ENCODE measurements at regions of chr17 and their contacts with region 1.

Region 1: GRCh38 chr17:39710002-39710964 is 10.4 kb downstream of the ERBB2 start:
- DNase-seq: no peak
- ATAC-seq: no peak
- H3K4me3 ChIP-seq: peak overlapping the region in 1 of 2 experiments; percentile 12
- H3K4me3 Mint-ChIP-seq: no peak overlapping the region
- H3K27ac ChIP-seq: peak overlapping the region in 1 of 2 experiments; percentile 54
- H3K27ac Mint-ChIP-seq: no peak overlapping the region
- H3K4me1 ChIP-seq: peaks cover 33% of the 10 kb centered on the region
- H3K4me1 Mint-ChIP-seq: peaks cover 12% of the 10 kb centered on the region
- H3K27me3 ChIP-seq: no peaks in the 10 kb centered on the region
- H3K27me3 Mint-ChIP-seq: no peaks in the 10 kb centered on the region
- CTCF ChIP-seq: no peak

Region 2: DNA sequence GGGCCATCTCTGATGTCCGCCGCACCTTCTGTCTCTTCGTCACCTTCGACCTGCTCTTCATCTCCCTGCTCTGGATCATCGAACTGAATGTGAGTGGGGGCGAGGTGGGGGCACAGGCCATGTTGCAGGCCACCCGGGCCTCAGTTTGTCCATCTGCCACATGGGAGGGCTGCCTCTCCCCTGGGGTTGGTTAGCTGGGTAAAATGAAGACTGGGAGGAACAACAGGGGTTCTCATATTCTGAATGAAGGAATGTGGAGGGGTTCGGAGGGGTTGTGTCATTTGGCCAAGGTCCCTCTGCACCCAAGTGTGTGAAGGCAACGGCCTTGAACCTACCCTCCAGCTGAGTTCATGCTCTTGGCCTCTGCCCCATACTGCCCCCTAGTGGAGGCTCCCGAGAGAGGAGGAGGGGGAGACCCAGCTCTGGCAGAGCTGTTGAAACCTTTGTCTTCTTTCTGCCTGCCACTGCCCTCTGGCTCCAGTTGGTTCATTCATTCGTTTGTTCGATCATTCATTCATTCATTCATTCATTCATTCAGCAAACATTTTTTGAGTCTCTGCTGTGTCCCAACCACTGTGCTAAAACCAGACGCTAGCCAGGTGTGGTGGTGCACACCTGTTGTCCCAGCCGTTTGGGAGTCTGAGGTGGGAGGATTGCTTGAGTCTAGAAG is 56.5 kb before region 1 on chr17:
- CTCF ChIA-PET with region 1: interaction called, 10 read pairs
- POLR2A ChIA-PET with region 1: no interaction called
- intact Hi-C with region 1: no loop called
- DNase-seq: peak; percentile 64 to 88 (median 81)
- ATAC-seq: peak; percentile 82
- H3K4me3 ChIP-seq: no peak overlapping the region
- H3K4me3 Mint-ChIP-seq: no peak overlapping the region
- H3K27ac ChIP-seq: no peak overlapping the region
- H3K27ac Mint-ChIP-seq: no peak overlapping the region
- H3K4me1 ChIP-seq: peaks cover 41% of the 10 kb centered on the region
- H3K4me1 Mint-ChIP-seq: peaks cover 60% of the 10 kb centered on the region
- H3K27me3 ChIP-seq: no peaks in the 10 kb centered on the region
- H3K27me3 Mint-ChIP-seq: no peaks in the 10 kb centered on the region
- CTCF ChIP-seq: peak; percentile 83